Left cardiac atrium (tissue), 4 donors: ENCODE measurements at regions of chr22 and their contacts with region 1.

Region 1: DNA sequence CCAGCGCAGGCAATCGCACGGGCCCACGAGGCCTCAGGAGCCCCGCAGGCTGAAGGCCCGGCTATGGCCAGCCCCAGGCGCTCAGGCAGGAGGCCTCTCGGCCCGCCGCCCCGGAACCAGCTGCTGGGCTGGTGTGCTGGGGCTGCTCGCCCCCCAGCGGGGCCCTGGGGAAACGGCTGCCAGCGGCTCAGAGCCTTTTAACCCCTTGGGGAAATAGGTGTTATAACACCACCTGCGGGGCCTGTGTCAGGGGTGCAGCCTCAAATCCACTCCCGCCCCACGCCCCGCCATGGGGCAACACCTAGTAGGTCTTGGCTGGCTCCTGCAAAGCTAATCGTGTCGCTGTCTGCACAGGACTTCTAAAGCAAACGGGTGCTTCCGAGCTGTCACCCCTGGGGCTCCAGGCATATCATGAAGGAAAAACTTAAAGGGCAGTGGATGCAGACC is 237.4 kb downstream of the TTC28 start:
- DNase-seq: peak; percentile 76
- ATAC-seq: peak; percentile 87 to 95

Region 2: DNA sequence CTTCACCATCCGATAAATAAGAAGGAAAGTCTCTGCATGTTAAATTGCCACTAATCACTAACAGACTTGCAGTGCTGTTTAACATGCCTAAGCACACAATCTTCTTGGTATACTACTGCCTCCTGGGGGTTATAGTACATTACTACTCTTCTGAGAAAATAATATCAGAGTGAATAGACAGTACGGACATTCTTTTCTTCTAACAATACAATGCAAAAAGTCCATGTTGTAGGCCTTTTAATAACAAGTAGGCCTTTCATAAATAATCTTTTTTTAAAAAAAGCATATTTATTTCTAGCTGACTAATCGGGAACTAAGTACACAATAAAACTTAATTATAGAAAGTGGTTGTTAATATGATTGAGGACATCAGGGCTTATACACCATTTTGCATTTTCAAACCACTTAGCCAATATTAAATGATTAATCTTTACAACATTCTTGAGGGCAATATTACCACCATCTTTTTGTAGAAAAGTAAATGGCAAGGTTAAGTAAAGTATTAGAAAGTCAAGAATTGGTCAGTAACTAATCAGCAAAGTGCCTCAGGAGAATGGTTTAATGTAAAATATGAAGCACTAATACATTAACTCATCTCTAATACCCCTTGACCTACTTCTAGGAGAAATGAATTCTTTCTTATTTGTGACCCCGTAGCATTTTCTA is 152.6 kb after region 1 on chr22:
- intact Hi-C with region 1: loop called in 1 of 2 experiments (anchors 10 kb)
- DNase-seq: no peak
- ATAC-seq: peak; percentile 82 to 90